Activated CD4-positive, alpha-beta T cell treated with anti-CD3 and anti-CD28 coated beads for 36 hours (primary cell): ENCODE measurements at regions of chr5 and their contacts with region 1.

Region 1: GRCh38 chr5:132103332-132103951 is 29.9 kb downstream of the CSF2 start:
- DNase-seq: peak; percentile 82
- ATAC-seq: peak; percentile 57
- H3K4me3 Mint-ChIP-seq: peak overlapping the region; percentile 64
- H3K27ac Mint-ChIP-seq: peak overlapping the region; percentile 98
- H3K4me1 Mint-ChIP-seq: peaks cover 73% of the 10 kb centered on the region
- H3K27me3 Mint-ChIP-seq: no peaks in the 10 kb centered on the region

Region 2: GRCh38 chr5:131394128-131394527 is 709.3 kb before region 1 on chr5:
- CTCF ChIA-PET with region 1: no interaction called
- POLR2A ChIA-PET with region 1: interaction called, 3 read pairs
- intact Hi-C with region 1: loop called in 1 of 2 experiments (anchors 5 kb)
- DNase-seq: peak; percentile 68
- ATAC-seq: peak; percentile 68
- H3K4me3 Mint-ChIP-seq: peak overlapping the region; percentile 65
- H3K27ac Mint-ChIP-seq: peak overlapping the region; percentile 97
- H3K4me1 Mint-ChIP-seq: peaks cover 85% of the 10 kb centered on the region
- H3K27me3 Mint-ChIP-seq: no peaks in the 10 kb centered on the region

Region 3: DNA sequence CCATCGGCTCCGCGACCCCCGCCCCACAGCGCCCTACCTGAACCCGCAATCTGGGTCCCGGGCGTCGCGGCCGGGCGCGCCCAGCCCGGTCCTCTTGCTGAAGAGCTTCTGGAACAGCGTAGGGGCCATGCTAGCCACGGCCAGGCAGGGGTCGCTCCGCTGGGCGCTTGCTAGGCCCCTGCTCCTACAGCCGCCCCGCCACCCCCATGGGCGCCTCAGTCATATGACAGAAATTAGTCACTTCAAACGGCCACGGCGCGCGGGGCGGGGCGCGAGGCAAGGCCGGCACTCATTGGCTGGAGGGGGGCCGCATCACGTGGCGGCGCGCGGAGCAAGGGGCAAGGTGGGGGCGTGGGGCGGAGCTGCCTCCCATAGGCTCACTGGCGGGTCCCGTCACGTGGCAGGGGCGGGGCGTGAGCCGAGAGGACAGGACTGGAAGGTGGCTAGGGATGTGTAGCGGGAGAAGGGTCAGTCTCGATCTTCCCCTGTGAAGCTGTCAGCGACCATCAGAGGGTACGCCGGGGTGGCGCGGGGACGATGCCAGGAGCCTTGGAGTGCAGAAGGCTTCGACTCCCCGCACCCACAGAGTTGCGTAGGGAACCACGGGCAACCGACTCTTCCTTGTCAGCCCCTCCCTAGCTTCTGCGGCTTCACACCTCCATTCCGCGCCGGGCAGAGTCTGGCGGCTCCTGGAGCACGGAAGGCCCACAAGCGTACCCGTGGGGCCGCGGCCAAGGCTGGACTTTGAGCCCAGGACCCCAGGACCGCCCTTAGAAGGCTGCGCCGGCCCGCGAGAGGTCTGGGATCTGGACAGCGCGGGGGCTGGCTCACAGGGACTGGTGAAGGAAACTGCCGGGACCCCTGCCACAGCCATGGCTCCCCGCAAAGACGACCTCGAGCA is 306.4 kb before region 1 on chr5 and contains the start of gene FNIP1:
- CTCF ChIA-PET with region 1: no interaction called
- POLR2A ChIA-PET with region 1: no interaction called
- intact Hi-C with region 1: loop called in 1 of 2 experiments (anchors 1 kb)
- DNase-seq: peak; percentile 99
- ATAC-seq: peak; percentile 98
- H3K4me3 Mint-ChIP-seq: peak within 1 kb of the TSS; percentile 99
- H3K27ac Mint-ChIP-seq: peak within 1 kb of the TSS; percentile 91
- H3K4me1 Mint-ChIP-seq: peaks cover 28% of the 10 kb centered on the region
- H3K27me3 Mint-ChIP-seq: no peaks in the 10 kb centered on the region
- total RNA-seq, gene FNIP1: 14.2 to 16.3 TPM

Region 4: GRCh38 chr5:132083071-132083678 is 20.3 kb before region 1 on chr5:
- CTCF ChIA-PET with region 1: interaction called, 3 read pairs
- POLR2A ChIA-PET with region 1: interaction called, 3 read pairs
- intact Hi-C with region 1: loop called (anchors 1 kb)
- DNase-seq: peak; percentile 76
- ATAC-seq: peak; percentile 91
- H3K4me3 Mint-ChIP-seq: peak overlapping the region; percentile 14
- H3K27ac Mint-ChIP-seq: peak overlapping the region; percentile 29
- H3K4me1 Mint-ChIP-seq: peaks cover 45% of the 10 kb centered on the region
- H3K27me3 Mint-ChIP-seq: peaks cover 5% of the 10 kb centered on the region

Region 5: DNA sequence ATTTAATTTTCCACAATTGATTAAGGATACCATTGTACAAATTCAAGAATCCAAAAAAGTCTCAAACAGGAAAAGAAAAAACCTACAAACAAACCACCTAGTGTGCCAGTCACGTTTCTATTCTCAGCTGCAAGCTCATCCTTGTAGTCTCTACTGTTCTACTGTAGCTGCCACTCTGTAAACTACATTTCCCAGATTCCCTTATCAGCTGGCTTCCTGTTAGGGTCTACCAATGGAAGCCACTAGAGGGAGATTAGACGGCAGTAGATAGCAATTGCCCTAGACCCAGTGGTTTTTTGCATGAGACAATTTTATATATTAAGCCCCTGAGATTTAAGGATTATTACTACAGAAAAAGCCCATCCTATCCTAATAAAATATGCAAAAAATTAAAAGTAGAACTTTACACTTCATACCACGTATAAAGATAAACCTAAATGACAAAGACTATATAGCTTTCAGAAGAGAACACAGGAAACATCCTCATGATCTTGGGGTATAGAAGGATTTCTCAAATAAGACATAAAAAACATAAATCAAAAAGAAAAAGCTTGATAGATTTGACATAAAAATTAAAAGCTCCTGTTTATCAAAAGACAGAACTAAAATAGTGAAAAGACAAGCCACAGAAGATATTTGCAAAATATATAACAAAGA is 86.8 kb after region 1 on chr5:
- CTCF ChIA-PET with region 1: interaction called, 10 read pairs
- POLR2A ChIA-PET with region 1: no interaction called
- intact Hi-C with region 1: no loop called
- DNase-seq: peak; percentile 17
- ATAC-seq: peak; percentile 100
- H3K4me3 Mint-ChIP-seq: no peak overlapping the region
- H3K27ac Mint-ChIP-seq: no peak overlapping the region
- H3K4me1 Mint-ChIP-seq: no peaks in the 10 kb centered on the region
- H3K27me3 Mint-ChIP-seq: peaks cover 9% of the 10 kb centered on the region

Region 6: DNA sequence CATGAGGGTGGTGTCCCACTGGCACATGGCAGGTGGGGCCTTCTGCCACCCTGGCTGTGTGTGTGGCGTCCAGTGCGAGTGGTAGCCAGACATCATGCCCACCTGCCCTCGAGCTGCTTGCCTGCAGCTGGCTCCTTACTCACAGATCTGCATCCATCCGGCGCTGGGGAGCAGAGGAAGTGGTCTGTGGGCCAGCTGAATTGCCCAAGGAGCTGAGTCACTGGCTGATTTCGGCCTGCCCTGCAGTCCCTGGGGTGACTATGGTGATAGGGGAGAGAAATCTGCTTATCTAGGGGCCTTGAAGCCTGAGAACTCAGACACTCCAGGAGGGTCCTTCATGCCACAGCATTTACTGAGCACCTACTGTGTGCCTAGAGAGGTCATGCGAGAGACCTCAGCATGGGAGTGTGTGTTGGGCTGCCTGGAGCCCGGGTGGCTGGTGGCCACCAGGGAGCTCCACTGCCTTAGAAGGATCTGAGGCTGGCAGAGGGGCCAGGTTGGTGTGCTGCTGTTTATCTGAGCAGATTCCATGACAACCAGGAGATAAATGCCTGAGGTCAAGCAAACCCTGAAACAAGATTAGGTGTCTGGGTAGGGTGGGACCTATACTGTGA is 323.2 kb after region 1 on chr5:
- CTCF ChIA-PET with region 1: no interaction called
- POLR2A ChIA-PET with region 1: interaction called, 3 read pairs
- intact Hi-C with region 1: loop called in 1 of 2 experiments (anchors 1 kb)
- DNase-seq: peak; percentile 84
- ATAC-seq: peak; percentile 46
- H3K4me3 Mint-ChIP-seq: peak overlapping the region; percentile 56
- H3K27ac Mint-ChIP-seq: peak overlapping the region; percentile 94
- H3K4me1 Mint-ChIP-seq: peaks cover 96% of the 10 kb centered on the region
- H3K27me3 Mint-ChIP-seq: no peaks in the 10 kb centered on the region

Region 7: DNA sequence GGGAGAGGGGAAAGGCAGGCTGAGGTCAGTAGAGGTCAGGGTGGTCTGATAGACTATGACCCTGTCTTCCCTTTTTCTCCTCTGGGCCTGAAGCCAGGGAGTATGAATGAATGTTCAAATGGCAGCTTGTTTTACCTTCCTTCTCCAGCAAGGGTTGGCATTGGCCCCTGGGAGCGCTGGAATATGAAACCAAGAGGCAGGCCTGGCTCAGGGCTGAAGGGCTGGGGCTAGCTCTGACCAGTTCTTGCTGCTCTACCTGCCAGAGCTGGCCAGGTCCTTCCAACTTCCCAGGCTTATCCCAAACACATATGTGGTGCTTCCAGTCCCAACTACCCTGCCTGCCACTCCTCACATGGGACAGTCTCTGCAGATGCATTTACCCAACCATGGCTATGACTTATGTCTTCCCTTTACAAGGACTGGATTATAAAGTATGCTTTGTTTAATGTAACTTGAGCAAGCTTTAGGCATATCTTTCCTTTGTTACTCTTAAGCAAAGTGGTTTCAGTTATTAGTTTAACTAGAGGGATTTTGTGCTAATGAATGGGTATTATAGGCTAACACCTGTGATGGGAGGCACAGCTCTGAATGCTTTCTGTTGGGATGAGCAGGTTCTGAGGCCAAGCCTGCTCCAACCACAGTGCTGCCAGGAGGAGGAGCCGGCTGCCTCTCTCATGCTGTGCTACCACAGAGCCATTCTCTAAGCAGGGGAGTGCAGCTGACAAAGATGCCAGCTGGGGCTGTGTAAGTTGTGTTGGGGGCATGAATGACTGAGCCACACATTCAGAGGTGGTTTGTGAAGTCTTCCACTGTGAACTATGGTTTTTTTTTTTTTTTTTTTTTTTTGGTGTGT is 649.9 kb after region 1 on chr5:
- CTCF ChIA-PET with region 1: no interaction called
- POLR2A ChIA-PET with region 1: no interaction called
- intact Hi-C with region 1: loop called in 1 of 2 experiments (anchors 10 kb)
- DNase-seq: peak; percentile 49
- ATAC-seq: peak; percentile 47
- H3K4me3 Mint-ChIP-seq: no peak overlapping the region
- H3K27ac Mint-ChIP-seq: peak overlapping the region; percentile 7
- H3K4me1 Mint-ChIP-seq: peaks cover 28% of the 10 kb centered on the region
- H3K27me3 Mint-ChIP-seq: no peaks in the 10 kb centered on the region